CD8-positive, alpha-beta T cell (primary cell): ENCODE measurements at regions of chr14 and their contacts with region 1.

Region 1: GRCh38 chr14:74945823-74946682 is 9.3 kb downstream of the PGF start:
- DNase-seq: peak; percentile 49 to 83 (median 76)
- ATAC-seq: peak; percentile 83
- H3K4me3 ChIP-seq: no peak overlapping the region
- H3K4me3 Mint-ChIP-seq: peak overlapping the region; percentile 18
- H3K27ac ChIP-seq: no peak overlapping the region
- H3K27ac Mint-ChIP-seq: no peak overlapping the region
- H3K4me1 ChIP-seq: peaks cover 30% of the 10 kb centered on the region
- H3K4me1 Mint-ChIP-seq: peaks cover 26% of the 10 kb centered on the region
- H3K27me3 ChIP-seq: no peaks in the 10 kb centered on the region
- H3K27me3 Mint-ChIP-seq: peaks cover 3% of the 10 kb centered on the region
- CTCF ChIP-seq: peak; percentile 84

Region 2: DNA sequence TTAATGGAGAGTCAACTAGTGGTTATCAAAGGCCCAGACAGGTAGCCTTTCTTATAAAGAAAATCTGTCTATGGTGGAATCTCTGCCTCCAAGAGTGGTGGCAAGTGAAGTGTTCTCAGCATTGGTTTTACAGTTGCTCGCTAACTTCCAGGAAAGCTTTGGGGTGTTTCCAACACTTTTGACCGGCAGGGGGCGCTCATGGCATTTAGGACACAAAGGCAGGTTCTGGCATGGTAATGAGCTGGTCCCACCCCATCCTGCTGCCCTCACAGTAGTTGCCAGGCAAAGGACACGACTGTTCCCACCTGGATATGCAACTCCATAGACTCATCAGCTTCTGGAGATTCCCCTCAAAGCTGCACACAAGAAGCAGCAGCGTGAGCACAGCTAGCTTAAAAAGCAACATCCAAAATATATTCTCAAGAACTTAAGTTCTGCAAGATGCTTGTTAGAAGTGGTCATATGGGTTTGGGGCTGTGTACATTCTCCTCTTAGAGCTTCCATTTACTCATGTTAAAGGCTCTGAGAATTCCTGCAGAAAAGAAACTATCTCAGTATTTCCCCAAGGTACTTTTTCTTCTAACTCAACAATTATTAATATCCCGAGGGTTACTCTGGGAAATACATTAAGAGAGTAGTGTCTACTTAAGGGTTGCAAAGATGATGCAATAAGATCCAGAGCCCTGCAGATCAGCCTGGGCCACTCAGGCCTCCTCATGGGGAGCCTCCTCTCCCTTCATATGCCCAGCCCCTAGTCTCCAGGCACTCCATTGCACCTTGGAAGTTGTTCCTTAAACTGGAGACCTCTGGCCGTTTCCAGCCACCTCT is 84.9 kb before region 1 on chr14:
- CTCF ChIA-PET with region 1: interaction called, 23 read pairs
- POLR2A ChIA-PET with region 1: no interaction called
- intact Hi-C with region 1: no loop called
- DNase-seq: peak; percentile 85 to 99 (median 90)
- ATAC-seq: peak; percentile 84
- H3K4me3 ChIP-seq: no peak overlapping the region
- H3K4me3 Mint-ChIP-seq: no peak overlapping the region
- H3K27ac ChIP-seq: no peak overlapping the region
- H3K27ac Mint-ChIP-seq: no peak overlapping the region
- H3K4me1 ChIP-seq: peaks cover 4% of the 10 kb centered on the region
- H3K4me1 Mint-ChIP-seq: peaks cover 7% of the 10 kb centered on the region
- H3K27me3 ChIP-seq: no peaks in the 10 kb centered on the region
- H3K27me3 Mint-ChIP-seq: no peaks in the 10 kb centered on the region
- CTCF ChIP-seq: peak; percentile 85

Region 3: DNA sequence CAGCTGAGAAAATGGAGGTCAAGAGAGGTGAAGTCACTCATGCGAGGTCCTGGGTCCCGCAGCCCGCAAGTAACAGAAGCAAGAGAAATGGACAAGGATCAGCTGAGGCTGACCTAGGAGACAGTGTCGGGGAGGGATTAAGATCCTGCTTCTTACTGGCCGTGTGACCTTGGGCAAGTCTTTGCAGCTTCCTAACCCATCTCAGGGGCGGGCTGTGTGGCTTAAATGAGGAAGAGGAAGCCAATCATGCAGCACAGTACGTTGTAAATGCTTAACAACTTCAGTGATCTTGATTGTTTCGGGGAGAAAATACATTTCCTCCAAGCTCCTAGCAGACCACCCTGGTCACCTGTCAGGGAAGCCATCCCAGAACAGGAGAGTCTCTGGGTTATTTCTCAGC is 16.4 kb after region 1 on chr14:
- CTCF ChIA-PET with region 1: interaction called, 32 read pairs
- POLR2A ChIA-PET with region 1: no interaction called
- intact Hi-C with region 1: no loop called
- DNase-seq: no peak
- ATAC-seq: no peak
- H3K4me3 ChIP-seq: no peak overlapping the region
- H3K4me3 Mint-ChIP-seq: no peak overlapping the region
- H3K27ac ChIP-seq: no peak overlapping the region
- H3K27ac Mint-ChIP-seq: no peak overlapping the region
- H3K4me1 ChIP-seq: no peaks in the 10 kb centered on the region
- H3K4me1 Mint-ChIP-seq: no peaks in the 10 kb centered on the region
- H3K27me3 ChIP-seq: no peaks in the 10 kb centered on the region
- H3K27me3 Mint-ChIP-seq: no peaks in the 10 kb centered on the region
- CTCF ChIP-seq: no peak

Region 4: GRCh38 chr14:74973003-74973653 is 27.1 kb after region 1 on chr14:
- CTCF ChIA-PET with region 1: interaction called, 13 read pairs
- POLR2A ChIA-PET with region 1: no interaction called
- intact Hi-C with region 1: no loop called
- DNase-seq: peak in 6 of 9 experiments; percentile 23 to 61 (median 28)
- ATAC-seq: peak; percentile 67
- H3K4me3 ChIP-seq: no peak overlapping the region
- H3K4me3 Mint-ChIP-seq: no peak overlapping the region
- H3K27ac ChIP-seq: no peak overlapping the region
- H3K27ac Mint-ChIP-seq: no peak overlapping the region
- H3K4me1 ChIP-seq: peaks cover 11% of the 10 kb centered on the region
- H3K4me1 Mint-ChIP-seq: peaks cover 4% of the 10 kb centered on the region
- H3K27me3 ChIP-seq: peaks cover 0 to 2% of the 10 kb centered on the region in 2 experiments
- H3K27me3 Mint-ChIP-seq: no peaks in the 10 kb centered on the region
- CTCF ChIP-seq: no peak

Region 5: DNA sequence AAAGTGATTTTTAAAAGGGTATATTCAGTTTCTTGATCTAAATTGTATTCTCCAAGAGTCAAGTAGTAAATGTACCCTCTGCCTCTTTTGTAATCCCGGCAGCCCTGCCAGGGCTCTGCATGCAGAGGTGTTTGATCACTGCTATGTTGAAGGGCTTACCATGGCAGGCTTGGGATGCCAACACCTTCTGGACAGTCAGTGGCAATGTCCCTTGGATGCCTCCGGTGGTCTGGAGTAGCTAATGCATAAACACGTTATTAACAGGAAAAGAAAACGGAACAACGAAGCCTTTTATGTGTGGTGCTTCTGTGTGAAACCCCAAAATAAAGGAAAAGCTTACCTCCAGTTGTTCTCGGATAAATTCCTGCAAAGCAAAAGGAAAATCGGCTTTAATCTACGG is 76.6 kb after region 1 on chr14:
- CTCF ChIA-PET with region 1: interaction called, 4 read pairs
- POLR2A ChIA-PET with region 1: no interaction called
- intact Hi-C with region 1: loop called (anchors 5 kb)
- DNase-seq: peak in 2 of 9 experiments; percentile 13 to 20
- ATAC-seq: no peak
- H3K4me3 ChIP-seq: no peak overlapping the region
- H3K4me3 Mint-ChIP-seq: no peak overlapping the region
- H3K27ac ChIP-seq: no peak overlapping the region
- H3K27ac Mint-ChIP-seq: no peak overlapping the region
- H3K4me1 ChIP-seq: no peaks in the 10 kb centered on the region
- H3K4me1 Mint-ChIP-seq: no peaks in the 10 kb centered on the region
- H3K27me3 ChIP-seq: no peaks in the 10 kb centered on the region
- H3K27me3 Mint-ChIP-seq: no peaks in the 10 kb centered on the region
- CTCF ChIP-seq: no peak